HEK293 (cell line): ENCODE measurements at regions of chr13 and their contacts with region 1.

Region 1: DNA sequence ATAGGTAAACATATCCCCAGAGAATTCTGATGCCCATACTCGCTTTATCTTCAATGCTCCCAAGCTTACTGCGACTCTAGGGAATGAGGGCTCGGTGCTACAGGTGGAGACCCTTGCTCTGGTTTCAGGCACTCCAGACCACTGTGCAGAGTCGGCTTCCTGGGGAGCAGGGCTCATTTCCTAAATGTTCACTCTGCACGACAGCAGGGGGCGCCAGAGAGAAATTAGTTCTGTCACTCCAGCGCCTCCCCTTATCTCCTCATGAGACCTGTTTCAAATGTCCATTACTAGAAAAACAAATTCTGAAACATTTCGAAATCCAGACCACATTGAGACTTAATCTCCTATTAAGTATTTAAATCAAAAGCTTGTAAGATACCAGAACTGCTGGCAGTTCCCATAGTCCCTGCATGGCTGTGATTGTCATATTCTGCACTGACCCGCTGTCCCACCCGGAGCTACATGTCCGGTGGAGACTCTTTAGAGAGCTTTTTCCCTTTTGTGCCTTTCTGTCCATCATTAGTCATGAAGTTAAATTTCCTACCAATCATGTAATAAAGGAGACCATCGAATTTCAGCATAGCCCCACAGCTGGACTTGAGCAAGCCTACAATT is 22.4 kb downstream of the EPSTI1 start:
- H3K4me3 ChIP-seq: no peak overlapping the region
- H3K27ac ChIP-seq: no peak overlapping the region
- H3K4me1 ChIP-seq: no peaks in the 10 kb centered on the region
- CTCF ChIP-seq: no peak

Region 2: GRCh38 chr13:42981317-42981716 is 11.7 kb after region 1 on chr13:
- CTCF ChIA-PET with region 1: interaction called, 16 read pairs
- POLR2A ChIA-PET with region 1: no interaction called
- H3K4me3 ChIP-seq: no peak overlapping the region
- H3K27ac ChIP-seq: no peak overlapping the region
- H3K4me1 ChIP-seq: no peaks in the 10 kb centered on the region
- CTCF ChIP-seq: no peak

Region 3: DNA sequence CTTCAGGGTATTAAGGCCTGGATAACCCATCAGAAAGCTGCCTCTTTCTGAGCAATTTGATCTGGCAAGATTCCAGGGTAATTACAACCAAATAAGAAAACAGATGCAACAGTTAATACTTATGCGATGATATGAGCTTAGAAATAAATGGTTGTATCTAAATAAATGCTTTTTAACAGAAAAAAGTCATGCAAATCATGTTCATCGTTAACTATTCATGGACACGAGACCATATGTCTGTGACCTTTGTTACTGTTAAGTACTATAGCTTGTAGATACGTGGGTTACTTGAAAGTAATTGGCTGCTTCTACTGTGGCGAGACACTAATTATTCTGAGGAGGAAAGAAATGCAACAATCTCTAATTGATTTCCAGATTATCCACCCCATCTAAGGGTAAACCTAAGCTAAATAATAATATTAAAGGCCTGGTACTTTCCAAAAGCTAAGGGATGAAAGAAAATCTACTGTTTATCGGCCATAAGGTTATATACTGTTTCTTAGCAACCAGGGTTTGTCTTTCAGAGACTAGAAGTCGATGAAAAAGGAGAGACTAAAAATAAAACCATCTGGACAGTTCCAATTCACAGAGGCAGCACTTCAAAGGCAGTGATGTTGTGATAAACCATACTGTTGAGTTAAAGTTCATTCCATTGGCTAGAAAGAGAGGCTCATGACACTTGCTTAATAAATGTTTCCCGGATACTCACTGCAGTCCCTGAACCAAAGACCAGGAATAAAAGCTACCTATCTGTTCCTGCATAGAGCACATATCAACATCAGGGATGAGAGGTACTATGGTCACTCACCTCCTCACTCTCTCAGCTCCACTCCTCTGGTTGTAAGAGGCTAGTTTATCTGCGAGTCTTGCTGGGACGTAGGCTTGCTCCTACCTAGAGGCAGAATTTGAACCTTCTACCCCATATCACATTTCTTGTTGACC is 20.9 kb after region 1 on chr13:
- CTCF ChIA-PET with region 1: interaction called, 12 read pairs
- POLR2A ChIA-PET with region 1: no interaction called
- H3K4me3 ChIP-seq: no peak overlapping the region
- H3K27ac ChIP-seq: no peak overlapping the region
- H3K4me1 ChIP-seq: no peaks in the 10 kb centered on the region
- CTCF ChIP-seq: no peak

Region 4: GRCh38 chr13:43058336-43058710 is 88.7 kb after region 1 on chr13:
- CTCF ChIA-PET with region 1: interaction called, 12 read pairs
- POLR2A ChIA-PET with region 1: no interaction called
- H3K4me3 ChIP-seq: no peak overlapping the region
- H3K27ac ChIP-seq: peak overlapping the region; percentile 77
- H3K4me1 ChIP-seq: peaks cover 17% of the 10 kb centered on the region
- CTCF ChIP-seq: no peak

Region 5: DNA sequence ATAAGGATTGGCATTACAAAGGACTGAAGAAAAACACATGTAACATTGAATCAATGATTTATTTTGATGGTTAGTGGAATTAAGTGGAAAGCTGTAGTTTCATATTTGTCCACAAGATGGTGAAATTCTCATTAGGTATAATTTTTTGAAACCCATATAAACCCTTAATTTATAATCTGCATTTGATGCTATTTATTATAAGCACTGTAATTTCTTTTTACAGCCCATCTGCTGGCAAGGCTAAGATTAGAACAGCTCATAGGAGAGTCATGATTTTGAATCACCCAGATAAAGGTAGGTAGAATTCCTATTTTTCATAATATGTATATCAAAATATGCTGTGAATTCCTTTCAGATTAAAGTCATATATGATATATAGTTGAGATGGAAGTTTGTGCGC is 115.9 kb after region 1 on chr13:
- CTCF ChIA-PET with region 1: interaction called, 27 read pairs
- POLR2A ChIA-PET with region 1: no interaction called
- H3K4me3 ChIP-seq: no peak overlapping the region
- H3K27ac ChIP-seq: no peak overlapping the region
- H3K4me1 ChIP-seq: no peaks in the 10 kb centered on the region
- CTCF ChIP-seq: no peak